ENCODE measurements at regions of chr3 and their contacts with region 1.

Region 1: DNA sequence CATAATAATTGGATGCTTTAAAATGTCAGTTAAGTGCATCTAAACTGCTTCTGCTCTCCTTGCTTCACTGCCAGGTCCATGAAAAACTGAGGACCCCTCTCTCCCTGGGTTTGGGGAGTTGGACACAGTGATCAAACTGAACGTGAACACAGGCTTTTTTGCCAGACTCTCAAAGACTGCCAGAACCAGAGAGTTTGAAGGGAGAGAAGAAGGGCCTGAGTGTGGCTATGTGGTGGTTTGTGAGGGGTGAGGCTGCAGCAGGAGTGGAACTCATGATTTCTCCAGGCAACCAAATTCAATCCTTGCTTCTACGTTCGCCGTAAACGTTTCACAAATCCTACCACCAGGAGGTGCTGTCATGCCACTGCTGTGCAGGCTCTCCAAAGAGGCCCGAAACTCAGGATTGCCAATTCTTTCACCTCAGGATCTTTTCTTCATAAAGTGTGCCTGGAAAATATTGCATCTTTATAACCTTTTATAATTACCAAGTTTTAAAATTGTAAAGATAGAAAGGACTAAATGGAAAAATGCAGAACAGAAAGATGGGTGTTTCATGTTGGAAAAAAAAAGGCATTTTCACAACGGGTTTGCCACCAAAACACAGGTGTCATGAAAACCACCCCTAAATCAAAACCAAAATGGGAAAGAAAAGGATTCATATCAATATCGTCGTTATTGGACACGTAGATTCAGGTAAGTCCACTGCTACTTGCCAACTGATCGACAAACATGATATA is 19.7 kb downstream of the TM4SF4 start:
- DNase-seq: no peak
- H3K4me3 ChIP-seq: no peak overlapping the region
- H3K27ac ChIP-seq: no peak overlapping the region
- H3K4me1 ChIP-seq: peaks cover 0 to 9% (median 0%) of the 10 kb centered on the region in 6 donors
- H3K27me3 ChIP-seq: peaks cover 0 to 19% (median 0%) of the 10 kb centered on the region in 7 donors
- CTCF ChIP-seq: peak in 10 of 11 experiments; percentile 16 to 77 (median 61)
- POLR2A ChIP-seq: no peak

Region 2: DNA sequence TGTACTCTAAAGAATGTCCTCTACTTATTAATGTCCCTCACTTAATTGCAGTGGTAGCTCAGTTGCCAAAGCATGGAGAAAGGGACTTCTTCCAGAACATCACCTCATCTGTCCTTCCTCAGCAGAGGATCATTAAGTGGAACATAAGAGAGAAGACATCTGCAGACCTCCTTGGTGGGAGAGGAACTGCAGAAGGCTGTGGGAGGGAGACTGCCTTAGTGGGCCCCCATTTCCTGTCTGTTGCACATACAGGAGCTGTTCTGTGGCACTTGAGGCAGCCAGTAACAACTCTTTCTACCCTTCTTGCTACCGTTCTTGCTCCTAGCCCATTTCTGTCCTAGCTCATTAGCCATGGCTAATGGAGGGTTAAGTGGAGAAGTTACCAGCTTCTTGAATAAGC is 331.1 kb before region 1 on chr3:
- intact Hi-C with region 1: no loop called
- DNase-seq: no peak
- H3K4me3 ChIP-seq: no peak overlapping the region
- H3K27ac ChIP-seq: peak overlapping the region in 1 of 8 donors; percentile 2
- H3K4me1 ChIP-seq: peaks cover 0 to 9% (median 0%) of the 10 kb centered on the region in 6 donors
- H3K27me3 ChIP-seq: no peaks in the 10 kb centered on the region
- CTCF ChIP-seq: no peak
- POLR2A ChIP-seq: no peak

Region 3: DNA sequence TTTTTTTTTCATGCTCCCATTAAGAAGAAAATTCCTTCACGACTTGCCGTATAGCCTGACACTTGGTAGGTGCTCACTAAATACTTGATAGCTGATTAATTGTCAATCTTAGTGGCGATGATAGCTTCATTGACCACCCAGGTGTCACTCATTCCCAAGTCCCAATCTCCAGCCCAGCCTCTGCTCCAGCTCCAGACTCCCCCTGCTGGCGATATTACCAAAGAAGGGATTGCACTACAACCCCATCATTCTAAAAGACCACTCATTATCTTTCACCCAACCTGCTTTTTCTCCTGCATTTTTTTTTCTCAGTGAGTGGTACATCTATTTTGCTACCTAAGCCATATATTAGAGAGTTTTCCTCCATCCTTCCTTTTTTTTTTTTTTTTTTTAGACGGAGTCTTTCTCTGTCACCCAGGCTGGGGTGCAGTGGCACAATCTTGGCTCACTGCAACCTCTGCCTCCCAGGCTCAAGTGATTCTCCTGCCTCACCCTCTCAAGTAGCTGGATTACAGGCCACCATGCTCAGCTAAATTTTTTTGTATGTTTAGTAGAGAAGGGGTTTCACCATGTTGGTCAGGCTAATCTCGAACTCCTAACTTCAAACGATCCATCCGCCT is 277.6 kb after region 1 on chr3:
- intact Hi-C with region 1: loop called (anchors 5 kb)
- DNase-seq: no peak
- H3K4me3 ChIP-seq: no peak overlapping the region
- H3K27ac ChIP-seq: no peak overlapping the region
- H3K4me1 ChIP-seq: no peaks in the 10 kb centered on the region
- H3K27me3 ChIP-seq: no peaks in the 10 kb centered on the region
- CTCF ChIP-seq: peak; percentile 22 to 77 (median 70)
- POLR2A ChIP-seq: no peak